ENCODE measurements at regions of chr7 and their contacts with region 1.

Region 1: DNA sequence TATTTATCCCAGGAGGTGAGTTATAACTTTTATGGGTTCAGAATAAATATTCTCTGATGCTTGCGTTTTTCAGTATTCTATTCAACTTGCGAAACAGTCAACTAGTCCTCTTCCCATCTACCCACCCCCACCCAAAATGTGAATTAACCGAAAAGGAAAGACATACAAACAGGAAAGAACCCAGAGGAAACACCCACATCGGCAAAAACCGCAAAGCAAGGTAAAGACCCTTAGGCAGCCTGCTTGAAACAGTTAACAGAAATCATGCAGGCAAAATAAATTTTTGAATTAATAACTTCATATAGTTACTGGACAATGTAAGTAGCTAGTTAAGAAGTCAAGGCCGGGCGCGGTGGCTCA is 5.4 kb downstream of the ZC3HAV1 start:
- DNase-seq: no peak
- ATAC-seq: peak; percentile 15
- H3K4me3 Mint-ChIP-seq: peak overlapping the region; percentile 93
- H3K27ac Mint-ChIP-seq: peak overlapping the region; percentile 94
- H3K4me1 Mint-ChIP-seq: peaks cover 37% of the 10 kb centered on the region
- H3K27me3 Mint-ChIP-seq: no peaks in the 10 kb centered on the region

Region 2: GRCh38 chr7:138961159-138961558 is 142.9 kb before region 1 on chr7:
- POLR2A ChIA-PET with region 1: no interaction called
- DNase-seq: no peak
- ATAC-seq: no peak
- H3K4me3 Mint-ChIP-seq: no peak overlapping the region
- H3K27ac Mint-ChIP-seq: no peak overlapping the region
- H3K4me1 Mint-ChIP-seq: peaks cover 2% of the 10 kb centered on the region
- H3K27me3 Mint-ChIP-seq: peaks cover 11% of the 10 kb centered on the region

Region 3: GRCh38 chr7:139086454-139086853 is 17.6 kb before region 1 on chr7:
- POLR2A ChIA-PET with region 1: interaction called, 36 read pairs
- DNase-seq: no peak
- ATAC-seq: no peak
- H3K4me3 Mint-ChIP-seq: peak overlapping the region; percentile 25
- H3K27ac Mint-ChIP-seq: peak overlapping the region; percentile 9
- H3K4me1 Mint-ChIP-seq: peaks cover 67% of the 10 kb centered on the region
- H3K27me3 Mint-ChIP-seq: no peaks in the 10 kb centered on the region